Activated CD4-positive, alpha-beta T cell treated with anti-CD3 and anti-CD28 coated beads, Interleukin-2, amount 10 ng/mL, durations not matched to agents 24 days and 14 days (primary cell): ENCODE measurements at regions of chr11 and their contacts with region 1.

Region 1: GRCh38 chr11:86456052-86456939 is 81.6 kb downstream of the CCDC81 start:
- DNase-seq: peak; percentile 93
- H3K4me3 Mint-ChIP-seq: no peak overlapping the region
- H3K27ac Mint-ChIP-seq: peak overlapping the region; percentile 45
- H3K4me1 Mint-ChIP-seq: peaks cover 45% of the 10 kb centered on the region
- H3K27me3 Mint-ChIP-seq: no peaks in the 10 kb centered on the region

Region 2: DNA sequence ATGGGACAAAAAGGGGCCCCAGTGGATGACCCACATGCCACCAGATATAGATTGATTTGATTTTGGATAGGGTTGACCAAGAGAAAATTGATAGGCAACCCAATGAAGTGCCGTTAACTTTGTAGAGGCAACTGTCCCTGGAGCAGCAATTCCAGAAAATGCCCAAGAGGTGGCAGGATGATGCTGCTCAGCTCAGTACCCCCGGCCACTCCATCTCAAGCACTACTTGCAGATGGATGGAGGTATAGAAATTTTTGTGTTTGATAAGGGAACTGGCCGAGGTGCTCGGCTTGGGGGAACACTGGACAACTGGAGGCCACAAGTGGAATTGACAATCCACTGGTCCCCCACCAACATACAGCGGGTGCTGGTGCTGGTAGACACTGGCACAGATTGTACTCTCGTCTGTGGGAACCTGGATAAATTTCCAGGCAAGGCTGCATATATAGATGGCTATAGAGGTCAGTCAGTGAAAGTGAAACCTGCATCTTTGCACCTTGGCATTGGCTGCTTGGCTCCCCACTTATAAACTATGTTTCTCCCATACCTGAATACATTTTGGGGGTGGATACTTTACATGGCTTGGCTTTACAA is 514.8 kb before region 1 on chr11:
- intact Hi-C with region 1: loop called (anchors 5 kb)
- DNase-seq: peak; percentile 77
- H3K4me3 Mint-ChIP-seq: no peak overlapping the region
- H3K27ac Mint-ChIP-seq: no peak overlapping the region
- H3K4me1 Mint-ChIP-seq: peaks cover 13% of the 10 kb centered on the region
- H3K27me3 Mint-ChIP-seq: no peaks in the 10 kb centered on the region

Region 3: GRCh38 chr11:86302100-86302793 is 154.0 kb before region 1 on chr11 and contains the start of gene HIKESHI:
- intact Hi-C with region 1: no loop called
- DNase-seq: peak; percentile 96
- H3K4me3 Mint-ChIP-seq: peak within 1 kb of the TSS; percentile 99
- H3K27ac Mint-ChIP-seq: peak within 1 kb of the TSS; percentile 98
- H3K4me1 Mint-ChIP-seq: peaks cover 19% of the 10 kb centered on the region
- H3K27me3 Mint-ChIP-seq: peaks cover 2% of the 10 kb centered on the region
- total RNA-seq, gene HIKESHI: 54.0 and 62.4 TPM in 2 replicates

Region 4: DNA sequence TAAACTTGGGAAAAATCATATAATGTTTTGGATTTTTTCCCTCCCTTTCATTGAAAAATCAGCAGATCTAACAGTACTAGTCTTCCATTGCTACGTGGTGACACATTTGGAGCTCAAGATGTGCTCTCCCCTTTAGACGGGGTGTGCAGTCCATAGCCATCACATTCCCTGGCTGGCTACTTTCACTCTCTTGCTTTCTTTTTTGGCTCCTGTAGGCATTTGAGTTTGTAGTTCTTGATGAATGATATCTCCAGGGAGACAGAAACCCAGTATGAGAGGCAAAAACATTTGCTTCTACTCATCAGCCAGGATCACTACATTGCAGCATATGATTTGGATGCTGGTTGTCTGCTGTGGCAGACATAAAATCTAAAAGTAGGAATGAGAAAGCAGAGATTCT is 69.5 kb before region 1 on chr11:
- intact Hi-C with region 1: no loop called
- DNase-seq: no peak
- H3K4me3 Mint-ChIP-seq: no peak overlapping the region
- H3K27ac Mint-ChIP-seq: no peak overlapping the region
- H3K4me1 Mint-ChIP-seq: no peaks in the 10 kb centered on the region
- H3K27me3 Mint-ChIP-seq: no peaks in the 10 kb centered on the region

Region 5: DNA sequence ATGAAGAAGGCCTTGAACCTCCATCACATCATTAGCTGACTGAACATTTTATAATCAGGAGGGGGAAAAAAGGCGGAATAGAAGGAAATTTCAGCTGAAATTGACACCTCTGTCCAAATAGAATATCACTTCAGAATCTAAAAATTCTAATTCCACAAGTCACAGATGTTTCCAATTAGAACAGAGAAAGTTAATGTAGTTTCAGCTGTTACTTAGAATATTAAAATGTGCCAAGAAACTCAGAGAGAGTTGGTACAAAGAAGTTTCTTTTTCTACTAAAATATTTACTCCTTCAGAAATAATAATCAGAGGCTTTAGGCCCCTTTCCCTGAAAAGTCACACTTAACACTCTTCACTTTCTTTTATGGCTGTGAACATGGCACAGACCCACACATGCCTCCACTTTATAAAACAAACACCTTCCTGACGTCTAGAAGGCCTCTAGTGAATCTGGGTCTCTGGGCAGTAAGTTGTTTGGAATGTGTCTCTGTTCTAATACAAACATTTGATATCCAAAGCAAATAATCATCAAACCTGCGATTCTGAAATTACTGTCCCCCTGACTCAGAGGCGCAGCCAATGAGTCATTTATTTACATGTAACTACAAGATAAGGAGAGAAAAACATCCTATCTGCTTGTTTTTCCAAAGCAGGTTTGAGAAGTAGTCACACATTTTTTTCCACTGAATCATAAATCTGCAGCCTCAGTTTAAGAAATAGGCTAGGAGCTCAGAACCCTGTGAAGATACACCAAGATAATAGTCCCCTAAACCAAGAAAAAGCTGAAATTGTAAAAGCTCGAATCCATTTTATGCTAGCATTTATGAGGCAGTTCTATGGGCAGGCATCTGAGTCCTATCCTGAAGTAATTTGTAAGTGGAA is 67.7 kb after region 1 on chr11:
- intact Hi-C with region 1: loop called (anchors 2 kb)
- DNase-seq: no peak
- H3K4me3 Mint-ChIP-seq: peak overlapping the region; percentile 35
- H3K27ac Mint-ChIP-seq: peak overlapping the region; percentile 88
- H3K4me1 Mint-ChIP-seq: peaks cover 28% of the 10 kb centered on the region
- H3K27me3 Mint-ChIP-seq: no peaks in the 10 kb centered on the region

Region 6: DNA sequence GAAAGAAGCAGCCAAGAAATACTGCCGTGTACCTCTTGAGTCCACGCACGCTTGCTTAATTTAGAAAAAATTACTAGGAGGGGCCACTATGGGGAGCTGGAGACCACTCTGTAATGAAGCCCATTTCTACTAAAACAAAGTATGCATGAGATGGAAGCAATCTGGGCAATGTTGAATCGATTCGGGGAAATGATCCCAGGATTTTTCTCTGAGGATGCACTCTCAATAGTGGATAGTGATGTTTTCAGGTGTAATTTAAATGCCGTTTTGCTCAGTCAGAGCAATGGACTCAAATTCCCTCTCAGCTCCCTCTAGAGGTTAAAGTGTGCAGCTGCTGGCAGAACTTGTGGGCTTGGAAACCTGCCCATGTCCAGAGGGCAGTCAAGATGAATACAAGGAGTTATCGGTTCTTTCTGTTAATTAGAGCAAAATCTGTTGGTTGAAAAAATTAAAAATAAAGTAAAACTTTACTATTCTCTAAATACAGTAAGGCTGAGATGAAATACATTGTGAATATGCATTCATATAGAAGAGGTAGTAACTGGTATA is 152.0 kb after region 1 on chr11:
- intact Hi-C with region 1: loop called (anchors 1 kb)
- DNase-seq: peak; percentile 82
- H3K4me3 Mint-ChIP-seq: no peak overlapping the region
- H3K27ac Mint-ChIP-seq: no peak overlapping the region
- H3K4me1 Mint-ChIP-seq: peaks cover 22% of the 10 kb centered on the region
- H3K27me3 Mint-ChIP-seq: peaks cover 3% of the 10 kb centered on the region

Region 7: GRCh38 chr11:86671682-86672621 is 215.7 kb after region 1 on chr11 and contains the start of gene ME3:
- intact Hi-C with region 1: loop called (anchors 5 kb)
- DNase-seq: peak; percentile 86
- H3K4me3 Mint-ChIP-seq: peak within 1 kb of the TSS; percentile 76
- H3K27ac Mint-ChIP-seq: peak within 1 kb of the TSS; percentile 63
- H3K4me1 Mint-ChIP-seq: peaks cover 12% of the 10 kb centered on the region
- H3K27me3 Mint-ChIP-seq: peaks cover 34% of the 10 kb centered on the region
- total RNA-seq, gene ME3: 12.2 and 12.9 TPM in 2 replicates

Region 8: GRCh38 chr11:86740709-86741483 is 284.6 kb after region 1 on chr11:
- intact Hi-C with region 1: loop called (anchors 2 kb)
- DNase-seq: peak; percentile 55
- H3K4me3 Mint-ChIP-seq: no peak overlapping the region
- H3K27ac Mint-ChIP-seq: peak overlapping the region; percentile 57
- H3K4me1 Mint-ChIP-seq: peaks cover 27% of the 10 kb centered on the region
- H3K27me3 Mint-ChIP-seq: no peaks in the 10 kb centered on the region

Region 9: DNA sequence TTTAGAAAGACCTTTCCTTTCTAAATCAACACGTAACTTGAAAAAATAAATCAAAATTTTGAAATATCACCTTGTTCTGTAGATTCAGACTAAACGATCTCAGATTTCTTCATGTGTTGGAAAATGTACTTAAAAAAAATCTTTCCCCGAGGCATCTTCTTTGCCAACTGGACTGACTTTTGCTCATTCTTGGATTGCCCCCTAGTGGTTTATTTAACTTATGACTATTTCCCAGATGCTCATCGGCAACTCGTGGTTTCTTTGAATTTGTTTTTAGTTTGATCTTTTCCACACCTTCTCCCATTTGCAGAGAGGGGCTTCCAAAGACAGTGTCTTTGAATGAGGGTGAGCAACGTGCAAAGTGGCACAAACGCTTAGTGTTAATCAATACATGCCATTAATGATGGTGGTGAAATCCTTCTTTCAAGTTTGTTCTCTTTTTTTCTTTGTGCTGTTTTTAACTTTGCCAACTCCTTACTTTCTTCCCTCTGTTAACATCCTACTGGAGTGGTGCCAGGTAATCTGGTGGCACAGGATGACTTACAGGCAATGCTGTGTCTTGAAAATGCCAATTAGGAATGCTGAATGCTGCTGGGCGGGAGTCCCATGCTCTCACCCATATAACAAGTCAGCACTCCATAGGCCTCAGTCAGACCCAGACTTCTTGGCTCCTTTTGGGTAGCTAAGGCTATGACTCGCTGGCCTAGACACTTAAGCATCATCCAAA is 362.3 kb after region 1 on chr11:
- intact Hi-C with region 1: loop called (anchors 1 kb)
- DNase-seq: peak; percentile 73
- H3K4me3 Mint-ChIP-seq: no peak overlapping the region
- H3K27ac Mint-ChIP-seq: peak overlapping the region; percentile 17
- H3K4me1 Mint-ChIP-seq: peaks cover 11% of the 10 kb centered on the region
- H3K27me3 Mint-ChIP-seq: peaks cover 27% of the 10 kb centered on the region